Activated naive CD4-positive, alpha-beta T cell treated with anti-CD3 and anti-CD28 coated beads for 36 hours (primary cell): ENCODE measurements at regions of chr2 and their contacts with region 1.

Region 1: DNA sequence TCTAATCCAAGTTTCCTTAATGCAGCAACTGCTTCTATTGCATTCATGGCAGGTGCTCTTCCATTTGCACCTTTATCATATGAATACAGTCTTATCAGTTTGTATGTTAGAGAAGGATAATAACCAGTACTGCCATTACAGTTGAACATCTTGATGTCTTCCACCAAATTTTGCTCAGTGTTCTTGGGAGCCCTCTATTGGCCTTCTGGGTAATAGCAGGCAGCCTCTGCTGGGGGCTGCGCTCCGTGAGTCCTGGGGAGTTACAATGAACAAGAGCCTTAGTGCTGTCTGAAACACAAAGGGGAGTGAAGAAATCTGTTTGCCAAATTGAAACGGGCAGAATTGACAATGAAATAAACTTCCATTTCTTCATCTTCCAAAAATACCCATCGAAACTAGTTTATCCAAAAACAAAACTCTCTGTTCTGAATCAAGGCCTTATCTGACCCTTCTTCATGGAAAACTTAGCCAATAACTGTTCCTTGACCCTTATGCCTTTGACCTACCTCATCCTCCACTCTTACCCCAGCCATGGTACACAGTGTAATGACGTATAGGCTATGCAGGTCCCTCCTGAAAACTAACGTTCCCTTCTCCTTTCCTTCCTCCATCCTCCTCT is 79.9 kb downstream of the ALK start:
- DNase-seq: peak; percentile 40
- H3K4me3 Mint-ChIP-seq: no peak overlapping the region
- H3K27ac Mint-ChIP-seq: no peak overlapping the region
- H3K4me1 Mint-ChIP-seq: no peaks in the 10 kb centered on the region
- H3K27me3 Mint-ChIP-seq: peaks cover 5% of the 10 kb centered on the region

Region 2: DNA sequence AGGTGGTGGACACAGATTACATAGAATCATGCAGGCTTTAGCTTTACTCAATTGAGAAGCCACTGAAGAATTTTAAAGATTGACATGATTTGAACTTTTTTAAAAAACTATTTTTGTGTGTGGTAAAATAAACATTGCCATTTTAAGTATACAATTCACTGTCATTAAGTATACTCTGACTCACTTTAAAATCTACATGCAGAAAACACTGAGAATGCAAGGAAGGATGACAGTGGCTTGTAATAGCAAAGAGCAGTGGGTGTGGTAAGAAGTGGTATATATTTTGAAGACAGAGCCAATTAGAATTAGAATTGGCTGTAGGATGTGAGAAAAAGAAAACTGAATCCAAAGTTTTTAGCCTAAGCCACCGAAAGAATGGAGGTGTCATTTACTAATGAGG is 986.3 kb before region 1 on chr2:
- CTCF ChIA-PET with region 1: no interaction called
- intact Hi-C with region 1: no loop called
- DNase-seq: no peak
- H3K4me3 Mint-ChIP-seq: no peak overlapping the region
- H3K27ac Mint-ChIP-seq: no peak overlapping the region
- H3K4me1 Mint-ChIP-seq: peaks cover under 1% of the 10 kb centered on the region
- H3K27me3 Mint-ChIP-seq: no peaks in the 10 kb centered on the region

Region 3: DNA sequence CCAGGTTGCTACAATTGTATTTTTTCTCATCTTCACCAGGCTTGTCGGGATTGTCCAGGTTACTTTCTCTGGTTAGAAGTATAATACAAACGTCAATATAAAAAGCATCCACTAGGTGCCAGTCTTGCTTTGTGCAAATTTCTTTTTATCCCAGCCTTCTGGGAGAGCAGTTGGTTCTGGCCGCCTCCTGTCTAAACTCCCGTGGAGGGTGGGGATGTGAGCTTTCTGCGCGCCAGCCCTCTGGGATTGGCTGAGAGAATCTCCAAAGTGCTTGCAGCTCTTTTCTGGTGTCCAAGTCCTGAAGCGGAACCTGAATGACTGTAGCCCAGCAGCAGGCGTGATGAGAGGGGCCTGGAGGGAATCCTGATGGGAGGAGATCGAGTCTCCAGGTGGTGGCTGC is 882.8 kb before region 1 on chr2:
- CTCF ChIA-PET with region 1: no interaction called
- intact Hi-C with region 1: loop called (anchors 2 kb)
- DNase-seq: peak; percentile 39
- H3K4me3 Mint-ChIP-seq: no peak overlapping the region
- H3K27ac Mint-ChIP-seq: no peak overlapping the region
- H3K4me1 Mint-ChIP-seq: no peaks in the 10 kb centered on the region
- H3K27me3 Mint-ChIP-seq: no peaks in the 10 kb centered on the region

Region 4: DNA sequence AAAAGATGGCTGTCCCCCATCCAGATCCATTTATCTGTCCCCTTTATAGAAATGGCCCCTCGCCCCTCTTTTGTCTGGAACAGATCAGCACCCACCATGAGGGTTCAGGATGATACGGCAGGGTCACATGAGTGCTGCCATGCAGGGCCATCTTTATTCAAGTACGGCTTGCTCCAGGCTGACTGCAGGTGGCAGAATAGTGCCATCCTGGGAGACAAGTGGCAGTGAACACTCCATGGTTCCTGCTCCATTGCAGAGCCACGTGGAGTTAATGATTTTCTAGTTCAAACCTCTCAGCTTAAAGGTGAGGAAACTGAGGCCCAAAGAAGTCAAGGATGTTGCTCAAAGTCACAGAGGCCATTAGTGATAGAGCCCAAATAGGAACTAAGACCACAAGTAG is 545.6 kb before region 1 on chr2:
- CTCF ChIA-PET with region 1: no interaction called
- intact Hi-C with region 1: loop called (anchors 1 kb)
- DNase-seq: peak; percentile 42
- H3K4me3 Mint-ChIP-seq: no peak overlapping the region
- H3K27ac Mint-ChIP-seq: no peak overlapping the region
- H3K4me1 Mint-ChIP-seq: no peaks in the 10 kb centered on the region
- H3K27me3 Mint-ChIP-seq: peaks cover 14% of the 10 kb centered on the region

Region 5: DNA sequence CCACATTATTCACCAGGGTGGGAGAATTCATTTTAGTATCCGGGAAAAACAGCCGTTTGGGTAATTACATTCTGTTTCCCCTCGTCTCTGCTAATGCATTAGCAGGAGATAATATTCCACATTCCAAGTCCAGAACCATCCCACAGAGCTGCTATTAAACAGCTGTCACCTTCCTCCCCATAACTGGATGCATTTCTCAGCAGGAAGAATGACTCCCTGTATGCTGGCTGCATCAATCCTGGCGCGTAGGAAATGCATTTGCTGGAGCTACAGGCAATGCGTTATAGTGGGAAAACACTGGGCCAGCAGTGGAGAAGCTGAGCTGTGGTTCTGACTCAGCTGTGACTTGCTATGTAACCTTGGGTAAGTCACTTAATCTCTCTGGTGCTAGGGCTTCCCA is 480.3 kb before region 1 on chr2:
- CTCF ChIA-PET with region 1: no interaction called
- intact Hi-C with region 1: no loop called
- DNase-seq: no peak
- H3K4me3 Mint-ChIP-seq: no peak overlapping the region
- H3K27ac Mint-ChIP-seq: no peak overlapping the region
- H3K4me1 Mint-ChIP-seq: no peaks in the 10 kb centered on the region
- H3K27me3 Mint-ChIP-seq: peaks cover 6% of the 10 kb centered on the region

Region 6: DNA sequence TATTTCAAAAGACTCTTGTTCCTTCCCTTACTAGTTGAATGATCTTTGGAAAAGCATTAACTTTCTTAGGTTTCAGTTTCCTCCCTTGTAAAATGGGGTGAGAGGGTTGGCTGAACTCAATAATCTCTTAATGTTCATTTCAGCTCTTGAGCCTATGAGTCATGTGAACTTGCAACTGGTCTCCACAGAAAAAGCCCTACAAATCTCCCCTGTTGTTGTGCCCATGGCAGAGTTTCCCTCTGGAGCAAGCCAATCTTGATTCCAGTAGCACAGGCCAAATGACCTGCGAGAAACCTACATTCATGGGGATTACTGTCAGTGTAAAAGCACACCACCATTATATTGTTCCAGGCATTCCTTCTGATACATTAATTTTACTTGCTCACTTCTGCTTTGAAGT is 309.1 kb before region 1 on chr2:
- CTCF ChIA-PET with region 1: no interaction called
- intact Hi-C with region 1: loop called (anchors 10 kb)
- DNase-seq: no peak
- H3K4me3 Mint-ChIP-seq: no peak overlapping the region
- H3K27ac Mint-ChIP-seq: no peak overlapping the region
- H3K4me1 Mint-ChIP-seq: peaks cover 5% of the 10 kb centered on the region
- H3K27me3 Mint-ChIP-seq: peaks cover 17% of the 10 kb centered on the region

Region 7: DNA sequence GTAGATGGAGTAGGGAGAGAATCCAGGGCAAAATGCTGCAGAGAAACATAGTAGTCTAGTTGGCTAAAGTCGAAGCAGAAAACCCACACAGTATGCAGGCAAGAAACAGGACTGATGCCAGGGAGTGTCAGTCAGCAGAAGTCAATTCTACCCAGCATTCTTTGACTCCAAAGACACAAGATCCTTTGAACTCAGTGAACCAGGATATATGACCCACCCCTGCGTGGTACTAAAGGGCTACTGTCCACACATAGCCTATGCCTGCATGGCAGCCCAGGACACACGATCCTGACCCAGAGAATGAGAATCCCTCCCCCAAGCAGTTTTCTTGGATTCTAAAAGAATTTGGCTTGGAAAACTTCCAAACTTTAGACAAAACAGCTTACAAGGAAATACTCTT is 37.4 kb after region 1 on chr2:
- CTCF ChIA-PET with region 1: no interaction called
- intact Hi-C with region 1: no loop called
- DNase-seq: no peak
- H3K4me3 Mint-ChIP-seq: no peak overlapping the region
- H3K27ac Mint-ChIP-seq: no peak overlapping the region
- H3K4me1 Mint-ChIP-seq: no peaks in the 10 kb centered on the region
- H3K27me3 Mint-ChIP-seq: peaks cover 3% of the 10 kb centered on the region